Aorta (tissue), 5 donors: ENCODE measurements at regions of chr5 and their contacts with region 1.

Region 1: GRCh38 chr5:89087551-89088318 is 204.8 kb upstream of the MEF2C start:
- DNase-seq: peak in 1 of 2 donors; percentile 58
- ATAC-seq: peak; percentile 87
- H3K4me3 ChIP-seq: no peak overlapping the region
- H3K27ac ChIP-seq: peak overlapping the region; percentile 95 to 96
- H3K4me1 ChIP-seq: peaks cover 0 to 6% of the 10 kb centered on the region in 2 donors
- H3K27me3 ChIP-seq: no peaks in the 10 kb centered on the region

Region 2: DNA sequence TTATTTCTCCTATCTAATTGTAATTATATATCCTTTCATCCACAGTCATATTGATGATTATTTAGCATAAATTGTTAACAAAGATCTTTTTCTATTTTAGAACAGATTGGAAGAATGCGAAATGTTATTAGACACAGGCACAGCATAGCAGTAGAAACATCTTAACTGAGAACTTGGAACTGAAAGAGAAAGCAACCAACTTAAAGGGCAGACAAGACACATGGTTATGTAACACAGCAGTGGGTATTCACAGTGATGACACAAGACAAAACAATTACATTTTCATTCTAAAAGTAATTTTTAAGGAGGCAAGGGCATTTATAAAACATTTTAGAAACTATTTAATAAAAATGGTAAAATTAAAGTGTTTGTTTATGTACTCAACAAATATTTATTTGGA is 147.0 kb before region 1 on chr5:
- intact Hi-C with region 1: loop called (anchors 5 kb)
- DNase-seq: no peak
- ATAC-seq: no peak
- H3K4me3 ChIP-seq: no peak overlapping the region
- H3K27ac ChIP-seq: no peak overlapping the region
- H3K4me1 ChIP-seq: no peaks in the 10 kb centered on the region
- H3K27me3 ChIP-seq: no peaks in the 10 kb centered on the region

Region 3: DNA sequence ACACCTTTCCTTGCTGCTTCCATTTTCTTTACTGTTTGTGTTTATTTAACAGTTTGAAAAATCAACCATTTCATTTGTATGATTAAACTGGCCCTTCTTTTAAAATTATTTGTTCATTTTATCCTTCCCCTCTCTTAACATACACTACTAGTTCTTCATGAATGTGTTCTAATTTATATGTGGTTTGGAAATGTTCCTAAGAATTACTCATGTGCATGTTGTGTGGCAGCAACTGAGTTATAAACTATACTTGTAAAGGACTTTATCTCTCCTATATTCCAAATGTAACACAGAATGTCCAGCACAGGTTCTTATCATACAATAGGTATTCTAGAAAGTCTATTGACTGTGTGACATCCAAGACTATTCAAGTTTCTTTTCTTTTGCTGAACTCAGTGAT is 153.5 kb after region 1 on chr5:
- intact Hi-C with region 1: no loop called
- DNase-seq: no peak
- ATAC-seq: no peak
- H3K4me3 ChIP-seq: no peak overlapping the region
- H3K27ac ChIP-seq: no peak overlapping the region
- H3K4me1 ChIP-seq: no peaks in the 10 kb centered on the region
- H3K27me3 ChIP-seq: no peaks in the 10 kb centered on the region